Right ventricle myocardium inferior (tissue), 1 donor: ENCODE measurements at regions of chr2 and their contacts with region 1.

Region 1: GRCh38 chr2:230913406-230914143 is 11.5 kb downstream of the GPR55 start:
- DNase-seq: no peak
- ATAC-seq: no peak

Region 2: DNA sequence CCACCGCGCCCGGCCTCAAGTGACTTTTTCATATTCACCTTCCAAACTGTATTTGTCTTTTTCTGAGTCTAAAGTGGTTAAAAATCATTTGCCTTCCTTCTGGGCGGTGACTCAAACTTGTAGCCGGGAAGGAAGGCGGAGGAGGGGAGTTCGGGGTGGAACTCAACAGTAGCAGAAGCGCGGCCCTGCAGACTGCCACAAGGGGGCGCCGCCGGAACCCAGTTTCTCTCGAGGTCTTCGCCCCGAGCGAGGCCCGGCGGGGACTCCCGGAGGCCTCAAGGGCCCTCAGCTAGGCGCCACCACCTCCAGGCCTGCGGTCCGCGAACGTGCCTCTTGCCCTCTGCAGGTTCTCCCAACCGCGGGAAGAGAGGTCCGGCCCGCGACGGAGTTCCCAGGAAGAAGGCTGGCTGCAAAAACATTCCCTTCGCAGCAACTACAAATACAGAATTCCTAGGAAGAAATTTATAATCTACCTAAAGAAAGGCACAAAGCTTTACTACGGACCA is 65.6 kb before region 1 on chr2:
- intact Hi-C with region 1: loop called (anchors 2 kb)
- DNase-seq: peak; percentile 92
- ATAC-seq: peak; percentile 81

Region 3: GRCh38 chr2:230861552-230862255 is 51.9 kb before region 1 on chr2:
- intact Hi-C with region 1: no loop called
- DNase-seq: no peak
- ATAC-seq: no peak